Testis (tissue), 5 donors: ENCODE measurements at regions of chr16 and their contacts with region 1.

Region 1: GRCh38 chr16:3059000-3059722 is 6.3 kb upstream of the IL32 start:
- DNase-seq: peak; percentile 83
- H3K4me3 ChIP-seq: peak overlapping the region; percentile 69 to 72
- H3K27ac ChIP-seq: peak overlapping the region; percentile 54 to 58
- H3K4me1 ChIP-seq: peaks cover 14% of the 10 kb centered on the region
- H3K27me3 ChIP-seq: no peaks in the 10 kb centered on the region
- CTCF ChIP-seq: peak; percentile 95 to 99 (median 96)
- POLR2A ChIP-seq: no peak

Region 2: DNA sequence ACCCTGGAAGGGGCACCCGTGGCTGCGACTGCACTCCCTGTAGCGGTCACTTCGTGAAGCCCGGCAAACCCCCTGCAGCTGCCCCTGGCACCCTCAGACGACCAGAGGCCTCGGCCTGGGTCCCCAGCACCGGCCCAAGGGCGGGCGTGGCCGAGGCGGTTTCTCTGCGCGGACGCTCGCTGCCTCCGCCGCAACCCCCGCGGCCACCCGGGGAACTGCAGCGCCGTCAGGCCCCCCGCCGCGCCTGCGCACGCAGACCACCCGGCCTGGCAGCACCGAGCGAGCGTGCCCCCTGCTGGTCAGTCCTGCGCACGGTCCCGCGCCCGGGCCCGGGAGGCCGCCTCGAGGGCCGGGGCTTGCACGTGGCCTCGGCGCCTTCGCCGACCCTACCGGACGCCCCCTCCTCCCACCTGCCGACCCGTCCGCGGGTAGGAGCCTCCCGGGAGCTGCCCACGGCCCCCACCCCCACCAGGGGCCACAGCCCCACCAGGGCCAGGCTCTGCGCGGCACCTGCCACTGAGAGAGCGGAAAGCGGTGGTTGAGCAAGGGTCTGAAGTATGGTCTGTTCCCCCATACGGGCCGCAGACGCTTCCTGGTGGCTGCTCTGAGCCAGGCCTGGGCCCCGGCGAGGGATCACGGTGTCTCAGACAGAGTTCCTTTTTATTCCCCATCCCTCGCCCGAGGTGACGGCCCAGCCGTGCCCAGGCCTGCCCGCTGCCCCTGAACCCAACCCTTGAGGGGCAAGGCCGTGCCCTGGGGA is 1129.4 kb before region 1 on chr16:
- intact Hi-C with region 1: no loop called
- DNase-seq: peak; percentile 91
- H3K4me3 ChIP-seq: peak overlapping the region; percentile 56 to 72
- H3K27ac ChIP-seq: peak overlapping the region in 1 of 2 donors; percentile 81
- H3K4me1 ChIP-seq: no peaks in the 10 kb centered on the region
- H3K27me3 ChIP-seq: no peaks in the 10 kb centered on the region
- CTCF ChIP-seq: peak; percentile 97 to 100 (median 100)
- POLR2A ChIP-seq: no peak

Region 3: GRCh38 chr16:3129137-3130131 is 70.3 kb after region 1 on chr16:
- intact Hi-C with region 1: loop called (anchors 5 kb)
- DNase-seq: peak; percentile 87
- H3K4me3 ChIP-seq: peak overlapping the region; percentile 27 to 49
- H3K27ac ChIP-seq: peak overlapping the region in 1 of 2 donors; percentile 68
- H3K4me1 ChIP-seq: peaks cover 25% of the 10 kb centered on the region
- H3K27me3 ChIP-seq: no peaks in the 10 kb centered on the region
- CTCF ChIP-seq: peak; percentile 68 to 88 (median 84)
- POLR2A ChIP-seq: no peak

Region 4: DNA sequence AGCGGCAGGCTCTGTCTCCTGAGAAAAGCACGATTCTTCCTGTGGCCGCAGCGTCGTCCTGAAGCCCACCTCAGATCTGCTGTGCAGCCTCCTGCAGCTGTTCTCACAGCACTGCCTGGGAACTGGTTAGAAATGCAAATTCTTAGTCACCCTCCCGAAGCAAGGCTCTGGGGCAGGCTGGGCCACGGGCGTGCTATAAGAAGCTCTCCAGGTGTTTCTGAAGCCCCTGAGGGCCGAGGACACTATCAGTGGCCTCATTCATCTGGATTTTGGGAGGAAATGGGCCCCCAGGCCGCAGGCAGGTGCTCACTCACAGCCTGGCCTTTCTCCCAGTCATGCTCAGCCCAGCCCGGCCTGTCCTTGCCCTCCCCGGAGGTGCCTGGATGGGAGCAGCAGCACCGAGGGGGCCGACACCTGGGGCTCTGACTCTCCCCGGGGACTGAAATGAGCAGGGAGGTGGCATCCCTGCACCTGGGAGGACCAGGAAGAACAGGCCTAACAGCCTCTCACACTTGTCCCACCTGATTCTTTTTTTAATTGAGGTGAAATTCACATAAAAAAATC is 528.5 kb after region 1 on chr16:
- intact Hi-C with region 1: no loop called
- DNase-seq: no peak
- H3K4me3 ChIP-seq: no peak overlapping the region
- H3K27ac ChIP-seq: no peak overlapping the region
- H3K4me1 ChIP-seq: no peaks in the 10 kb centered on the region
- H3K27me3 ChIP-seq: no peaks in the 10 kb centered on the region
- CTCF ChIP-seq: no peak
- POLR2A ChIP-seq: no peak